ENCODE measurements at regions of chr12 and their contacts with region 1.

Region 1: DNA sequence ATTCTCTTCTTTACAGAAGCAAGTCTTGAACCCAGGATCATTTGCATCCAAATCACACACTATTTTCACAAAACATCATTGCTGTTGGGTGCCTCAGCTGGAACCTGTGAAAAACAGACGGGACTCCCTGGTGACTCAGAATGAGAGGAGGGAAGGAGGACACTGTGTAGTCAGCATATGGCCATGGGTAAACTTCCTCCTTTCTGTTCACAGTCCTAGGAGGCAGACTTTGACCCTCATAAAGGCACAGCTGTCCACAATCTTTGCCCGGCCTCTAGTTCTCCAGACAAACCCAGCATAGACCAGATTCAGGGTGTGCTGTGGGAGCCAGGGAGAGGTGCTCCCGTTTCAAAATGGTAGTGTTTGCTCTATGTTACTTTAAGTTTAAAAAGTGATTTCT is 62.0 kb downstream of the DYRK2 start:
- DNase-seq: peak; percentile 79

Region 2: GRCh38 chr12:68482660-68483059 is 772.1 kb after region 1 on chr12:
- in situ Hi-C with region 1: loop called (anchors 25 kb)
- DNase-seq: no peak

Measured in Caki2 (cell line).